ENCODE measurements at regions of chr16 and their contacts with region 1.

Region 1: DNA sequence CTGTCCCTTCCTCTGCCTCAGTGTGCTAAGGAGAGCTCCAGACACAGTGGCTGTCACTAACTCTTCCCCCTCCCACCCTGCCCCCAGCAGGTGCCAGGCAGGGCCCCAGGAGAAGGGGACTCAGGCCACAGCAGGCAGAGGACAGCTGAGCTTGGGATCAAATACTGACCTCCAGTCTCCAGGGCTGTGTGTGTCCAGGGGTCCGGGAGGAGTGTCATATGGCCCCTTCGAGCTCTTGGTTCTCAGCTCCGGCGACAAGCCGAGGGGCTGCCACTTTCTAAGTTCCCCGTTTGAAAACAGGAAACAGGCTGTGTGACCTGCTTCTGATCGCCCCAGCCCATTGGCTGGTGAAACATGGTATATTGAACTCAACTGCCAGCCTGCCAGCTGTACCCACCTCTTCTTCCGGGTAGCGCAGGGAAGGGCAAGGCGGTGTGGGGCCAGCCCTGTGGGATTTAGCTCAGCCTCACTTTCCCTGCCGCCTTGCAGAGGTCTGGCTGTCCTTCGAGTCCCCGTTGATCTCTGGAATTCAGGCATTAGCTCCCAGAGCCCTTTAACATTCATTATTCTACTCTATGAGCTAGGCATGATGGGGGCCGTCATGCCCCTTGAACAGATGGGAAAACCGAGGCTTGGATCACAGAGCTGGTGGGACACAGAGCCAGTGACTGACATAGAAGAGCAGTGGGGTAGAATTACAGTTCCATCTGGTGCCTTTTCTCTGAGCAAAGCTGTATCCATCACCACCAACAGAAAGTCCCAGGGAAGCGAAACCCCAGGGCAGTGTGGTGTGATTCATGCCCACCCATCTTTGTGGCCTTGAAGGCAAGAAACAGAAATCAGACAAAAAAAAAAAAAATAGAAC is at the start of gene SNX20:
- DNase-seq: peak; percentile 53 to 84
- ATAC-seq: peak; percentile 79 to 82 (median 80)
- H3K4me3 ChIP-seq: peak within 1 kb of the TSS; percentile 74
- H3K4me3 Mint-ChIP-seq: peak within 1 kb of the TSS; percentile 85
- H3K27ac ChIP-seq: peak within 1 kb of the TSS; percentile 95
- H3K27ac Mint-ChIP-seq: peak within 1 kb of the TSS; percentile 95 to 96
- H3K4me1 ChIP-seq: peaks cover 87% of the 10 kb centered on the region
- H3K4me1 Mint-ChIP-seq: peaks cover 89% of the 10 kb centered on the region in 2 donors
- H3K27me3 ChIP-seq: no peaks in the 10 kb centered on the region
- H3K27me3 Mint-ChIP-seq: no peaks in the 10 kb centered on the region
- CTCF ChIP-seq: no peak
- total RNA-seq, gene SNX20: 33.0 to 53.9 (median 51.7) TPM

Region 2: GRCh38 chr16:50351116-50351515 is 330.1 kb before region 1 on chr16:
- intact Hi-C with region 1: no loop called
- DNase-seq: no peak
- ATAC-seq: no peak
- H3K4me3 ChIP-seq: no peak overlapping the region
- H3K4me3 Mint-ChIP-seq: no peak overlapping the region
- H3K27ac ChIP-seq: no peak overlapping the region
- H3K27ac Mint-ChIP-seq: peak overlapping the region; percentile 45 to 73
- H3K4me1 ChIP-seq: no peaks in the 10 kb centered on the region
- H3K4me1 Mint-ChIP-seq: peaks cover 11 to 27% of the 10 kb centered on the region in 2 donors
- H3K27me3 ChIP-seq: no peaks in the 10 kb centered on the region
- H3K27me3 Mint-ChIP-seq: no peaks in the 10 kb centered on the region
- CTCF ChIP-seq: no peak

Region 3: GRCh38 chr16:50697851-50698767 is 16.9 kb after region 1 on chr16:
- intact Hi-C with region 1: loop called (anchors 2 kb)
- DNase-seq: peak; percentile 34 to 77
- ATAC-seq: peak; percentile 64 to 75 (median 67)
- H3K4me3 ChIP-seq: peak overlapping the region; percentile 41
- H3K4me3 Mint-ChIP-seq: peak overlapping the region; percentile 82
- H3K27ac ChIP-seq: peak overlapping the region; percentile 86
- H3K27ac Mint-ChIP-seq: peak overlapping the region; percentile 86 to 95
- H3K4me1 ChIP-seq: peaks cover 67% of the 10 kb centered on the region
- H3K4me1 Mint-ChIP-seq: peaks cover 42 to 51% of the 10 kb centered on the region in 2 donors
- H3K27me3 ChIP-seq: no peaks in the 10 kb centered on the region
- H3K27me3 Mint-ChIP-seq: peaks cover 0 to 10% of the 10 kb centered on the region in 2 donors
- CTCF ChIP-seq: no peak

Region 4: DNA sequence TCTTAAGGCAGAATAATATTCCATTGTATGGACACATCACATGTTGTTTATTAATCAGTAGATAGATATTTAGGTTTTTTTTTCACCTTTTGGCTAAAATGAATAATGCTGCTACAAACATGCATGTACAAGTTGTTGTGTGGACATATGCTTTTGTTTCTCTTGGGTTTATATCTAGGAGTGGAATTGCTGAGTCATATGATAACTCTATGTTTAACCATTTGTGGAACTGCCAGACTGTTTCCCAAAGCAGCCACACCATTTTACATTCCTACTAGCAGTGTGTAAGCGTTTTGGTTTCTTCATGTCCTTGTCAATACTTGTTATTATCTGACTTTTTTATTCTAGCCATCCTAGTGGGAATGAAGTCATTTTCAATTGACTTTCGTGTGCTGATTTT is 82.0 kb after region 1 on chr16:
- intact Hi-C with region 1: no loop called
- DNase-seq: no peak
- ATAC-seq: no peak
- H3K4me3 ChIP-seq: no peak overlapping the region
- H3K4me3 Mint-ChIP-seq: no peak overlapping the region
- H3K27ac ChIP-seq: no peak overlapping the region
- H3K27ac Mint-ChIP-seq: peak overlapping the region in 1 of 2 donors; percentile 17
- H3K4me1 ChIP-seq: peaks cover 2% of the 10 kb centered on the region
- H3K4me1 Mint-ChIP-seq: peaks cover 80 to 81% of the 10 kb centered on the region in 2 donors
- H3K27me3 ChIP-seq: no peaks in the 10 kb centered on the region
- H3K27me3 Mint-ChIP-seq: no peaks in the 10 kb centered on the region
- CTCF ChIP-seq: no peak